ENCODE measurements at regions of chr11 and their contacts with region 1.

Region 1: DNA sequence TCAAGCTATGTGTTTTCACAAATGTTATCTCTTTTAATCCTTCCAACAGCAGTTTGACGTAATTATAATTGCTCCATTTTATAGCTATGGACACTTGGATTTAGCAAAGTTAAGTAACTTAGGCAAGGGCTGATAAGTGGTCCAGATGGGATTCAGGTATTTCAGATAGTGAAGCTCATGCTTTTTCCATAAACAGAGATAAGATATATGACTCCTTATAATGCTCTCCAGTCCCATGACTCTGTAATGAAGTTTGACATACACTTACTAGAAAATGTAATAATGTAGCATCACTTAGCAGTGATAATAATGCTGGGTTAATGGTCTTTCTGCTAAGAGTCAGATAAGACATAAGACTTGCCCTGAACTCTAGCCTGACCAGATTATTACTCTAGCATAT is 892.1 kb downstream of the LRRC4C start:
- DNase-seq: no peak
- H3K4me3 ChIP-seq: no peak overlapping the region
- H3K27ac ChIP-seq: no peak overlapping the region
- H3K4me1 ChIP-seq: no peaks in the 10 kb centered on the region
- H3K27me3 ChIP-seq: no peaks in the 10 kb centered on the region
- CTCF ChIP-seq: no peak

Region 2: DNA sequence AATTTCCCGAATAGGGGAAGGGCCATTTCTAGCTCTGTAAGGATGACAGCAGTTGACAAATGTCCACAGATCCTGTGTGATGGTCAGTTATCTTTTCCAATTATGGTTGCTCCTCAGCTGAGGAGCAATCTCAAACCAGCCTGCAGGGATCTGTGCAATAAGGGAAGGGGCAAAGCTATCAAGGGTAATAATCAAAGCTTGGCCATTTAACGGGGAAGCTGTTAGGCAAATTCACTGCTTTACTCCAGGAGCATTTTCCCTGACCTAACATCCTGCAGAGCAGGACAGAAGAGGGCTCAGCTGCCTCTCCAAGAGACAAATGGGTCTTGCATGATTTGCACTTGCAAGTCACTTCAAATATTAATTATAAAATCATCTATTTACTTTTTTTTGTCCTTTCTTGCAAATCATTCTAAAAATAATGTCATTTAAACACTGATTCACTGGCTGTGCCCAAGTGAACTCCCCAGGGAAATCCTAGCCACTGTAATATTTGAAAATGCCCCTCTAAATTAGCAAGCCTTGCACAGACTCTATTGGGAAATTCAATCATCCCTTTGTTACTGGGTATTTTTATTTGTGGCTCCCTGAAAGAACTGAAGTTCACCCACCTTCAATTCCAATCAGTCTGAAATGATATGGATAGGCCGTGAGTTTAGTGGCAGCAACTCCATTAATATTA is 364.7 kb before region 1 on chr11:
- CTCF ChIA-PET with region 1: no interaction called
- dilution Hi-C with region 1: no loop called
- in situ Hi-C with region 1: no loop called
- intact Hi-C with region 1: no loop called
- DNase-seq: no peak
- H3K4me3 ChIP-seq: no peak overlapping the region
- H3K27ac ChIP-seq: no peak overlapping the region
- H3K4me1 ChIP-seq: no peaks in the 10 kb centered on the region
- H3K27me3 ChIP-seq: no peaks in the 10 kb centered on the region
- CTCF ChIP-seq: no peak

Region 3: DNA sequence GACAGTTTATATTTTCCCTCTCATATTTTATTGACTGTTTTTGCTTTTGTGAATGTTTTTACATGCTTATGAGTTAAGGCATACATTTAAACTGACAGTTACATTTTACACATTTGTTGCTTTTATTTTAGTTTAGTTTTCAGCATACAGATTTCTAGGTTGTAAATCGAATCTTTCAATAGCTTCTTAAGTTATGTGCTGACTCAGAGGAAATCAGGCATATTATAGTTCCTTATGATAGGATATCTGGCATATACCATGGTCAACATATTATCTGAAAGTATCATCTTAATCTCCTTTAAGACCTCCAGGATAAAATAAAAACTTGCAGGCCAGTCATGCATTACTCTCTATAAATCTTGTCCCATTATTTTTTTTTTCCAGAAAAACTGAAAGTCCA is 24.6 kb before region 1 on chr11:
- CTCF ChIA-PET with region 1: no interaction called
- dilution Hi-C with region 1: no loop called
- in situ Hi-C with region 1: no loop called
- intact Hi-C with region 1: no loop called
- DNase-seq: no peak
- H3K4me3 ChIP-seq: no peak overlapping the region
- H3K27ac ChIP-seq: no peak overlapping the region
- H3K4me1 ChIP-seq: no peaks in the 10 kb centered on the region
- H3K27me3 ChIP-seq: no peaks in the 10 kb centered on the region
- CTCF ChIP-seq: no peak

Region 4: DNA sequence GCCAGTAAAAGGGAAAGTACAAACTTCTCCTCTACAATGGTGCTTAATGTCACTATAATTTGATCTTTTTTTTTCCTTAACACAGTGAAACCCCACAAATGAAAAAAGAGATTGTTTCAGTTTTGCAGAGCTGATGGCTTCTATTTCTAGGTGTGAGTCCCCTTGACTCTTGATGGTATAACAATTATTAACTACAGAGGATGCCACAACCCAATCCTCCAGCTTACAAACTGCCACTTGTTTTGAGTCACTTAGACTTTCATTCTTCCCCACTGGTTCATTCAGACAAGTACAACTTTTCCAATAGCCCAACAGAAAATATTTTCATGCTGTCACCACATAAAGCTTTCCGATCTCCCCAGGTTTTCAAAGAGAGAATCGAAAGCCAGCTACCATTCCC is 79.9 kb after region 1 on chr11:
- CTCF ChIA-PET with region 1: no interaction called
- dilution Hi-C with region 1: no loop called
- in situ Hi-C with region 1: no loop called
- intact Hi-C with region 1: no loop called
- DNase-seq: no peak
- H3K4me3 ChIP-seq: no peak overlapping the region
- H3K27ac ChIP-seq: no peak overlapping the region
- H3K4me1 ChIP-seq: no peaks in the 10 kb centered on the region
- H3K27me3 ChIP-seq: no peaks in the 10 kb centered on the region
- CTCF ChIP-seq: no peak

Region 5: DNA sequence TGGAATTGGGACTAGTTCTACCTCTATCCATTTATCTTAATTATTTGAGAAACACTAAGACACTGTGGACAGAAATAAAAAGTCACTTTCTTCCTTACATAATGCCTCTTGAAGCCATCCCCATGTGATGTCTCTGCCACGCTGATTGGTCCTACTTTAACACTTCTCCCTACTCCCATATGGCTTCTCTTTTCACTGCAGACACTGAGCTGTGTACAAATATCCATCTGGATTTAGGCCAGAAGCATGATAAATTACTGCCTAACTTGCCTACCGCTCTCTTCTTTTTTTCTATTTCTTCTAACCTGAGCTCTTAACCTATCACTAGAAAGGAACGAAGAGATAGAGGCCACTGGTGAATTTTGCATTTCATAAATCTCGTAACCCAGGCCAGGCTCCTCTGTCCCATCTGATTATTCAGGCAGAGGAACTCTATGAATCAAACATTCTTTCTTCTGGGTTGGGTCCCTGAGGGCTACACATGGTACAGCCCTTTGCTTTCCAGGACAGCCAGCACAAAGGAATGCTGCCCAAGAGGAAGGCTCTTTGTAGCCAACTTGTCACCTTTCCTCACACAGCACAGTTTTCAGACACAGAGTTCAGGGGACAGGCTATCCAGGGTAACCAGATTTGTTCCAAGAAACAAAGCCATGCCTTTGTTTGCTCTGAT is 1770.5 kb after region 1 on chr11:
- CTCF ChIA-PET with region 1: interaction called, 21 read pairs
- dilution Hi-C with region 1: no loop called
- in situ Hi-C with region 1: no loop called
- intact Hi-C with region 1: no loop called
- DNase-seq: peak; percentile 4
- H3K4me3 ChIP-seq: no peak overlapping the region
- H3K27ac ChIP-seq: no peak overlapping the region
- H3K4me1 ChIP-seq: peaks cover 13% of the 10 kb centered on the region
- H3K27me3 ChIP-seq: no peaks in the 10 kb centered on the region
- CTCF ChIP-seq: no peak

Measured in mammary epithelial cell (primary cell).